HCT116 (cell line): ENCODE measurements at regions of chr9 and their contacts with region 1.

Region 1: DNA sequence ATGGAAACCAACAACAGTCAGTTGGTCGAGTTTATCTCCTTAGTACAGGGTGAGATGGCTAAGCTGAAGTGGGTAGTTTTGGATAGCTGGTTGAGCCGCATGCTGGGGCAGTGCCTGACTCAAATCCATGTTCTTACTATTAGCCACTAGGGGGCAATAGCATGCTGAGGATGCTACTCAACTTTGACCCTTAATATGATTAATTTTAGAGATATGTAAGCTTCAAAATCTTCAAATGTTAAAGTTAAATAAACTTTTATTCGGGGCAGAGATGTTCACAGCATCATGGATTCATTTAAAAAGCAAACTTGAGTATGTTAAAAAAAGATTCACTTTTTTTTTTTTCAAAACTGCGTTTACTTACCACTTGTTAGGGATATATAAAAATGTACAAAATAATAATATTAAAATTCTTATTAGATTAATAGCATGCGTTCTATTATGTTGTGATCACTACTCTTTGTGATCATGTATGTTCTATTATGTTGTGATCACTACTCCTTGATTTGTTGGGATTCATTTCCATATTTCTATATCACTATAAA is 57.0 kb downstream of the C9orf153 start:
- DNase-seq: peak; percentile 27
- ATAC-seq: peak; percentile 98
- H3K4me3 ChIP-seq: no peak overlapping the region
- H3K27ac ChIP-seq: no peak overlapping the region
- H3K4me1 ChIP-seq: no peaks in the 10 kb centered on the region
- H3K27me3 ChIP-seq: no peaks in the 10 kb centered on the region
- CTCF ChIP-seq: peak; percentile 51 to 81 (median 80); a peak in 5 of 6 replicates
- POLR2A ChIP-seq: no peak
- RAD21 ChIP-seq: peak; percentile 73

Region 2: DNA sequence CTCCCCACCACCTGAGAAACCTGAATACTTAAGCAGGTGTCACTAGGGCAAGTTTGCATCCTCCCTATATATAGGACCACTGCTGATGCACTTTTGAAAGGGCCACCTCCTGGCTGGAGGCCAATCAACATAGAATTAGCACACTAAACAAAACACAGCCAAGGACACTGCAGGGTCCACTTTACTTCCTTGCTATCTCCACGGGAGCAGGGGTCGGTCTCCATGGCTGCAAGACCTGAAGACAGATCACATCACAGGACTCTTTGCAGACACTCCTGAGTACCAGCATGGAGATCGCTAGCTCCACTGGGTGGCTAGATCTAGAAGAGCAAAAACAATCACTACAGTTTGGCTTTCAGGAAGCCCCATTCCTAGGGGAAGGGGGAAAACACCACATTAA is 15.3 kb before region 1 on chr9:
- CTCF ChIA-PET with region 1: interaction called, 14 read pairs
- POLR2A ChIA-PET with region 1: no interaction called
- RAD21 ChIA-PET with region 1: no interaction called
- intact Hi-C with region 1: no loop called
- DNase-seq: no peak
- ATAC-seq: peak; percentile 53; the same call in 1 of the 2 replicates
- H3K4me3 ChIP-seq: no peak overlapping the region
- H3K27ac ChIP-seq: no peak overlapping the region
- H3K4me1 ChIP-seq: peaks cover 0 to 2% of the 10 kb centered on the region in 2 experiments; a peak in 2 of 4 replicates
- H3K27me3 ChIP-seq: no peaks in the 10 kb centered on the region
- CTCF ChIP-seq: peak in 2 of 3 experiments; percentile 32 to 34; a peak in 2 of 6 replicates
- POLR2A ChIP-seq: no peak
- RAD21 ChIP-seq: peak; percentile 68

Region 3: GRCh38 chr9:86368871-86369521 is 166.6 kb after region 1 on chr9:
- CTCF ChIA-PET with region 1: no interaction called
- POLR2A ChIA-PET with region 1: no interaction called
- RAD21 ChIA-PET with region 1: no interaction called
- intact Hi-C with region 1: no loop called
- DNase-seq: no peak
- ATAC-seq: no peak
- H3K4me3 ChIP-seq: no peak overlapping the region
- H3K27ac ChIP-seq: no peak overlapping the region
- H3K4me1 ChIP-seq: no peaks in the 10 kb centered on the region
- H3K27me3 ChIP-seq: no peaks in the 10 kb centered on the region
- CTCF ChIP-seq: no peak
- POLR2A ChIP-seq: no peak
- RAD21 ChIP-seq: no peak